ENCODE measurements at regions of chr2 and their contacts with region 1.

Region 1: DNA sequence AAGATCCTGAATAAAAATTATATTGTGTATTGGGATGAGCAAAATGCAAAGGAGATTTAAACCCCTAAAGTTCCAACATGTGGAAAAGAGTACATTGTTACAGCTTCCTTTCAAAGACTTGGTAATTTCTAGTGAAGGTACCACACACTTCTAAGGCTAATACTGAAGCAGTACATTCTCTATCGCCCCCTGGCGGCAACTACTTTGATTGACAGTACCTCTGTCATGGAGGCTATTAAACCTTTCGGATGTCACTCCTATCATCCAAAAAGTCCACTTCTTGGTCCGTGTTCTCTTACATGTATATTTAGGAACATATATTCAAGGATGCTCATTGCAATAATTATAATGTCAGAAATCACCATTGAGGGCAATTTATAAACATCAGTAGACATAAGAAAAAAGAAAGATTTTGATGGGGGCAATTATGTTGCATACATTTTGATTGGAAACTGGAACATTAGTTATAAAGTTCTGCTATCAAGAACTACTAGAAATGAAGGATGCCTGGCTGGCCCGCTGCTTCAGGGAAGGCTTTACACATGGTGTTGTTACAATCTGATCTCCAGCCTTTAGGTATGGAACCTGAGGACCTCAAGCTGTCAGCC is 601.6 kb downstream of the CPS1 start:
- DNase-seq: peak; percentile 18 to 53 (median 35)
- H3K4me3 ChIP-seq: no peak overlapping the region
- H3K4me3 Mint-ChIP-seq: no peak overlapping the region
- H3K27ac ChIP-seq: no peak overlapping the region
- H3K27ac Mint-ChIP-seq: no peak overlapping the region
- H3K4me1 ChIP-seq: no peaks in the 10 kb centered on the region
- H3K4me1 Mint-ChIP-seq: no peaks in the 10 kb centered on the region
- H3K27me3 ChIP-seq: no peaks in the 10 kb centered on the region
- H3K27me3 Mint-ChIP-seq: no peaks in the 10 kb centered on the region

Region 2: GRCh38 chr2:210577263-210578071 is 580.5 kb before region 1 on chr2:
- CTCF ChIA-PET with region 1: no interaction called
- POLR2A ChIA-PET with region 1: no interaction called
- intact Hi-C with region 1: loop called (anchors 2 kb)
- DNase-seq: peak in 4 of 5 donors; percentile 9 to 33 (median 24)
- H3K4me3 ChIP-seq: no peak overlapping the region
- H3K4me3 Mint-ChIP-seq: no peak overlapping the region
- H3K27ac ChIP-seq: no peak overlapping the region
- H3K27ac Mint-ChIP-seq: no peak overlapping the region
- H3K4me1 ChIP-seq: no peaks in the 10 kb centered on the region
- H3K4me1 Mint-ChIP-seq: no peaks in the 10 kb centered on the region
- H3K27me3 ChIP-seq: no peaks in the 10 kb centered on the region
- H3K27me3 Mint-ChIP-seq: peaks cover 0 to 2% of the 10 kb centered on the region in 2 donors

Measured in CD4-positive, alpha-beta memory T cell (primary cell).